ENCODE measurements at regions of chr20 and their contacts with region 1.

Region 1: DNA sequence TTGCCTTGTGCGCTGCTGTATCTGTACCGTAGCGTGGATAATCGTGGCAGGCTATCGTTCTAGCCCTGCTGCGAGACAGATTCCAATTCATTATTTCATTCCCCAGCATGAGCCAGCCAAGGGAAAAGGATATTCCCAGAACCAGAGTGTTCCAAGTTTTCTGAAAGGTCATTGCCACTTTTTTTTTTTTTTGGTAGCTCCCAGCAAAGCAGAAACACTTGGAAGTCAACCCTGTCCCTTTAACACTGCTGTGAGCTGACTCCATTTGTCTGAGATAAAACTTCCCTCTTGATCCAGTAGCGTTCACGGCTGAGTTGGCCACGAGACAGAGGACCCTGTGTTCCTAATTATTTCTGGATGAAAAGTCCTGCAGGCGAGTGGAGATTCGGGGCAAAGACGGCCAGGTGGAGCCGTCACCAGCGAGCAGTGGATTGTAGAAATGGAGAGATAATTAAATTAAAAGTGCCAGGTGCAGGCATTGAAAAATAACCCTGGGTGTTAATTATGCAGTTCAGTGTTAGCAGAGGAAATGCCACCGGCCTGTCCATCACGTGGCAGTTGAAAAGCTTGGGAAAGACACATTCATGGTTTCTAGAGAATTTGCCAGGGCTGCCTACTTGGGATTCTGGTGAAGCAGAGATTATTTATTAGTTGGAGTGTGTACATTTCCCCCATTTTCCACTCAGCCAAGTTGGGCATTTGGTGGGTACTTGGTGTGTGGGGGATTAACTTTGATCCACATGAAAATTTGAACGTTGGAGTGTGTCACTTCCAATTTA is 164.2 kb downstream of the SLC24A3 start:
- DNase-seq: no peak
- ATAC-seq: no peak
- H3K4me3 Mint-ChIP-seq: no peak overlapping the region
- H3K27ac Mint-ChIP-seq: no peak overlapping the region
- H3K4me1 Mint-ChIP-seq: no peaks in the 10 kb centered on the region
- H3K27me3 Mint-ChIP-seq: peaks cover 5% of the 10 kb centered on the region

Region 2: GRCh38 chr20:18188434-18188833 is 1188.2 kb before region 1 on chr20:
- CTCF ChIA-PET with region 1: no interaction called
- POLR2A ChIA-PET with region 1: interaction called, 11 read pairs
- intact Hi-C with region 1: no loop called
- DNase-seq: no peak
- ATAC-seq: no peak
- H3K4me3 Mint-ChIP-seq: no peak overlapping the region
- H3K27ac Mint-ChIP-seq: no peak overlapping the region
- H3K4me1 Mint-ChIP-seq: no peaks in the 10 kb centered on the region
- H3K27me3 Mint-ChIP-seq: no peaks in the 10 kb centered on the region

Region 3: GRCh38 chr20:19419396-19419795 is 42.8 kb after region 1 on chr20:
- CTCF ChIA-PET with region 1: no interaction called
- POLR2A ChIA-PET with region 1: no interaction called
- intact Hi-C with region 1: no loop called
- DNase-seq: no peak
- ATAC-seq: no peak
- H3K4me3 Mint-ChIP-seq: no peak overlapping the region
- H3K27ac Mint-ChIP-seq: no peak overlapping the region
- H3K4me1 Mint-ChIP-seq: no peaks in the 10 kb centered on the region
- H3K27me3 Mint-ChIP-seq: no peaks in the 10 kb centered on the region

Measured in activated CD4-positive, alpha-beta T cell treated with anti-CD3 and anti-CD28 coated beads for 36 hours (primary cell).